Caco-2 (cell line): ENCODE measurements at regions of chr11 and their contacts with region 1.

Region 1: DNA sequence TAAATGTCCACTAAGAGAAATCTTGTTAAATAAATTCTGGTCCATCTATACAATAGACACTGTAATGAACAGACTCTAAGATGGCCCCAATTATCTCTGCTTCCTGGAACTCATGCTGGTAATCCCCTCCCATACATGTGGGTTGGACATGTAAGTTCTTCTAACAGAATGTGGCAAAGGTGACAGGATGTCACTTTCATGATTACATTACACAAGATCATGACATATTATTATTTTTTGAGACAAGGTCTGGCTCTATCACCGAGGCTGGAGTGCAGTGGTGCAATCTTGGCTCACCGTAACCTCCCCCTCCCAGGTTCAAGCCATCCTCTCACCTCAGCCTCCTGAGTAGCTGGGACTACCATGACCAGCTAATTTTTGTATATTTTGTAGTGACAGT is 14.6 kb upstream of the NDUFC2 start:
- DNase-seq: no peak
- H3K4me3 ChIP-seq: no peak overlapping the region
- H3K4me3 Mint-ChIP-seq: no peak overlapping the region
- H3K27ac Mint-ChIP-seq: no peak overlapping the region
- H3K4me1 ChIP-seq: peaks cover 21% of the 10 kb centered on the region
- H3K4me1 Mint-ChIP-seq: peaks cover 32% of the 10 kb centered on the region
- H3K27me3 ChIP-seq: no peaks in the 10 kb centered on the region
- H3K27me3 Mint-ChIP-seq: no peaks in the 10 kb centered on the region
- CTCF ChIP-seq: no peak

Region 2: GRCh38 chr11:77820563-77821348 is 273.5 kb before region 1 on chr11 and contains the starts of genes AAMDC and RSF1:
- CTCF ChIA-PET with region 1: no interaction called
- POLR2A ChIA-PET with region 1: no interaction called
- intact Hi-C with region 1: loop called (anchors 5 kb)
- DNase-seq: peak; percentile 100
- H3K4me3 ChIP-seq: peak within 1 kb of the TSS; percentile 100
- H3K4me3 Mint-ChIP-seq: peak within 1 kb of the TSS; percentile 84
- H3K27ac Mint-ChIP-seq: peak within 1 kb of the TSS; percentile 77
- H3K4me1 ChIP-seq: peaks cover 36% of the 10 kb centered on the region
- H3K4me1 Mint-ChIP-seq: peaks cover 6% of the 10 kb centered on the region
- H3K27me3 ChIP-seq: no peaks in the 10 kb centered on the region
- H3K27me3 Mint-ChIP-seq: no peaks in the 10 kb centered on the region
- CTCF ChIP-seq: peak; percentile 72 to 92
- total RNA-seq, gene AAMDC: 87.7 and 89.7 TPM in 2 replicates
- total RNA-seq, gene RSF1: 108 and 121 TPM in 2 replicates

Region 3: GRCh38 chr11:78050964-78051831 is 43.1 kb before region 1 on chr11:
- CTCF ChIA-PET with region 1: interaction called, 10 read pairs
- POLR2A ChIA-PET with region 1: interaction called, 4 read pairs
- intact Hi-C with region 1: loop called (anchors 1 kb)
- DNase-seq: peak; percentile 63 to 73
- H3K4me3 ChIP-seq: no peak overlapping the region
- H3K4me3 Mint-ChIP-seq: no peak overlapping the region
- H3K27ac Mint-ChIP-seq: peak overlapping the region; percentile 94
- H3K4me1 ChIP-seq: peaks cover 21% of the 10 kb centered on the region
- H3K4me1 Mint-ChIP-seq: peaks cover 26% of the 10 kb centered on the region
- H3K27me3 ChIP-seq: no peaks in the 10 kb centered on the region
- H3K27me3 Mint-ChIP-seq: no peaks in the 10 kb centered on the region
- CTCF ChIP-seq: no peak

Region 4: DNA sequence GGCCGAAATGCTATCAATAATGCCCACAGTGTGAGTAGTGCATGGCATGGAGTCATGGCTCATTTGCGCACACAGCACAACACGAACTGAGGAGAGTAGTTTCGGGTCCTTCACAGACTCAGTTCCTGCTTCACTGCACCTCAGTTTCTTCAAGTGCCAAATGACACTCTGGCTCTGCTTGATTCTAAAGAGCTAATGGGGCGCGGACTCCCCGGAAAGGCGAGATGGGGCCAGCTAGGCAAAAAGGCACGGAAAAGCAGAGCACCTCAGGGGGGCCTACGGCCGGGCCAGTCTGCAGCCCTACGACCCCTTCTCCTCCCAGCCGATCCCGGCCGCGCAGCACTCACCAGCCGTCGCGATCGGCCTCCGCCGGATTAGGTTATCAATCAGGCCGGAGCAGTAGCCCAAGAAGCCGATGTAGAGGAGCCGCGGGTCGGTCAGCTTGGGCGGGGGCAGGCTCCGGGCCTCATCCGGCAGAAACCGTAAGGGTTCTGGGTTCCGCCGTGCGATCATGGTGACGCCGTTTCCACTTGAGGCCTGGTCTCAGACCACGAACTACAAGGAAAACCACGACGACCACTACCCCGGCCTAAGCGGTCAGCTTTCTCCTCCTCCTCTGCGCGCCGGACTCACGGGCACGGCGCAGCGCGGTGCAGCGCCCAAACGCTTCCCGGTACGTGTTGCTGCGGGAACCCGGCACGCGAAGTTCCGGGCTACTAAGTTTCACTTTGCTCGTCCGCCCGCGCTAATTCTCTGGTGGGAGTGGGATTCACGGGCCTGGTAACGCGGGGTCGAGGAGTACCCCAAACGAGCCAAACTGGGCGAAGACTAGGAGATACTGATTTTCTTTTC is 14.8 kb before region 1 on chr11 and contains the start of gene NDUFC2:
- CTCF ChIA-PET with region 1: interaction called, 5 read pairs
- POLR2A ChIA-PET with region 1: interaction called, 3 read pairs
- intact Hi-C with region 1: loop called (anchors 1 kb)
- DNase-seq: peak; percentile 87
- H3K4me3 ChIP-seq: peak within 1 kb of the TSS; percentile 73
- H3K4me3 Mint-ChIP-seq: peak within 1 kb of the TSS; percentile 76
- H3K27ac Mint-ChIP-seq: peak within 1 kb of the TSS; percentile 52
- H3K4me1 ChIP-seq: peaks cover 49% of the 10 kb centered on the region
- H3K4me1 Mint-ChIP-seq: peaks cover 37% of the 10 kb centered on the region
- H3K27me3 ChIP-seq: no peaks in the 10 kb centered on the region
- H3K27me3 Mint-ChIP-seq: no peaks in the 10 kb centered on the region
- CTCF ChIP-seq: no peak
- total RNA-seq, gene NDUFC2: 732 and 805 TPM in 2 replicates

Region 5: GRCh38 chr11:78112582-78113275 is 18.5 kb after region 1 on chr11:
- CTCF ChIA-PET with region 1: no interaction called
- POLR2A ChIA-PET with region 1: no interaction called
- intact Hi-C with region 1: no loop called
- DNase-seq: no peak
- H3K4me3 ChIP-seq: no peak overlapping the region
- H3K4me3 Mint-ChIP-seq: no peak overlapping the region
- H3K27ac Mint-ChIP-seq: no peak overlapping the region
- H3K4me1 ChIP-seq: no peaks in the 10 kb centered on the region
- H3K4me1 Mint-ChIP-seq: peaks cover 6% of the 10 kb centered on the region
- H3K27me3 ChIP-seq: no peaks in the 10 kb centered on the region
- H3K27me3 Mint-ChIP-seq: no peaks in the 10 kb centered on the region
- CTCF ChIP-seq: no peak

Region 6: DNA sequence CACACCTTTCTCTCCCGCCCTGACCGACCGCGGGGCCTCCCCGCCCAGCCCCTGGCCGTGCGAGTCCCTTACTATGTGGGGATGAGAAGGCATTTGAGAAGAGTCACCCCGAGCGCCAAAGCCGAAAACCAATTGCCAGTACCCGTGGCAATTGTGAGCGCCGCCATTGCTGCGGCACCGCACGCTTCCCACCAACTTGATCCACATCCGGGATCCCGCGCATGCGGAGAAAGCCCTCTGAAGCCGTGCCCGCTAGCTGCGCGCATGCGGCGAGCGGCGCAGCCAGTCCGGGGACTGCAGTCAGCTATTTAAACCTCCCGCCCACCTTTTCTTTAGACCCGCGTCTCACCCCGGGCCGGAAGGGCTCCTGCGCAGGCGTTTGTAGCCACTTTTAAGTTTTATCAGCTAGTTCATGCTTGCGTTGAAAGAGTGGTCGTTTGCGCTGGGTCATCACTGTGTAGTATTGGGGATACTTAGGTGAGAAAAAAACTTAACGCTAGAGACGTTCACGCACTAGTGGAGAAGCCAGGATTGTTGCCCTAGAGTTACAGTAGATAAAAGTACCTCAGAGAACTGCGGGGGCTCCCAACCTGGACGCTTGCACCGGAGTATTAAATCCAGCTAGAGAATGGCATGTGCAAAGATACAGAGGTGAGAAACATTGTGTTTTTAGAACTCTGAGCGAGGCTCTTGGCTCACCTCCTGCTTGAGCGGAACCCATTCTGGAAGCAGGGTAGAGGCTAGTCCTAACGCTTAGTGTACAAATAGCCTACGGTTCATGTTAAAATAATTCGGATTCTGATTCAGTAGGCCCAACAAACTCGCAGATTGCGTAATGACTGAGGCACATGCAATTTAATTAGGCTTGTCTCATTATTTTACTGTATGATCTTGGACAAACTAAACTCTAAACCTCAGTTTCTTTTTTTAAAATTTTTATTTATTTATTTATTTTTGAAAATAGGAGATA is 45.5 kb after region 1 on chr11 and contains the start of gene ALG8:
- CTCF ChIA-PET with region 1: interaction called, 3 read pairs
- POLR2A ChIA-PET with region 1: interaction called, 9 read pairs
- intact Hi-C with region 1: loop called (anchors 1 kb)
- DNase-seq: peak; percentile 99
- H3K4me3 ChIP-seq: peak within 1 kb of the TSS; percentile 49
- H3K4me3 Mint-ChIP-seq: peak within 1 kb of the TSS; percentile 90
- H3K27ac Mint-ChIP-seq: peak within 1 kb of the TSS; percentile 83
- H3K4me1 ChIP-seq: peaks cover 5% of the 10 kb centered on the region
- H3K4me1 Mint-ChIP-seq: peaks cover 21% of the 10 kb centered on the region
- H3K27me3 ChIP-seq: no peaks in the 10 kb centered on the region
- H3K27me3 Mint-ChIP-seq: no peaks in the 10 kb centered on the region
- CTCF ChIP-seq: no peak
- total RNA-seq, gene ALG8: 188 and 191 TPM in 2 replicates